AG04449 (cell line): ENCODE measurements at regions of chr12 and their contacts with region 1.

Region 1: GRCh38 chr12:3299929-3300832 is 190.8 kb upstream of the PRMT8 start:
- DNase-seq: peak; percentile 70
- H3K4me3 ChIP-seq: peak overlapping the region; percentile 32
- CTCF ChIP-seq: peak; percentile 94

Region 2: DNA sequence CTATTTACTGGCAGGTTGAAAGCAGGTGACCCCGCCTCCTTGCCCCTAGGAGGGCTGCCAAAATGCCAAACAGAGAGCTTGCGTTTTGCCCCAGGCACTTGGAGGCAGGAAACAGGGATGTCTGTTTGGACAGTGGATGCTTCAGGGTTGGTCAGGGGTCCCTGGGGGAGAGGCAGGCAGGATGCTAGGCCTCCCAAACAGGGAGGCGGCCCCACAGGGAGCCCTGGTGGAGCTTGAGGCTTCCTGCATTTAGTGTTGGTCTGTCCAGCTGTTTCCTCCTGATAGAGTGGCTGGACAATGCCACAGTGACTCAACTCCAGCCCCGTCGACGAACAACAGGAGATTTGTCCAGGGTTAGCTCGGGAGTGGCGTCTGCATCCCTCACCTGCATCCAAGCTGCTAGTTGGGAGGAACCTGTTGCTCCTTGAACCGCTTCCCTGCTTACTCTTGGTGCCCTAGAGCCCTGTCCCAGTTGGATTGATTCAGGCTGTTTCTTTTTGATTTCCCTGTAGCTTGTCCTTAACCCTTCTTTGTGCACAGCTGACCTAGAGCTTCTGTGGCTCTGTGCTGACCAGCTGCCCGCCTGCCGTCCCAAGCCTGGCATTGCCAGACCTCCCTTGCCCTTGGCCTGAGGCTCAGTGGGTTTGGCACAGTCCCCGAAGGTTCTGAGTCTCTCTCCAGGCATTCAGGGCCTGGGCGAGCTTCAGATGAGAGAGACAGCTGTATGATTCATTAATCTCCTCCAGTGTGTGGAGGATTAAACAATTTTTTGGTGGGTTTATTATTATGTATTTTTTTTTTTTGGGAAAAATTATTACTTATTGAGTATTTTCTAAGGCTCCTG is 177.1 kb before region 1 on chr12:
- CTCF ChIA-PET with region 1: interaction called, 12 read pairs
- POLR2A ChIA-PET with region 1: no interaction called
- DNase-seq: no peak
- H3K4me3 ChIP-seq: no peak overlapping the region
- CTCF ChIP-seq: no peak

Region 3: DNA sequence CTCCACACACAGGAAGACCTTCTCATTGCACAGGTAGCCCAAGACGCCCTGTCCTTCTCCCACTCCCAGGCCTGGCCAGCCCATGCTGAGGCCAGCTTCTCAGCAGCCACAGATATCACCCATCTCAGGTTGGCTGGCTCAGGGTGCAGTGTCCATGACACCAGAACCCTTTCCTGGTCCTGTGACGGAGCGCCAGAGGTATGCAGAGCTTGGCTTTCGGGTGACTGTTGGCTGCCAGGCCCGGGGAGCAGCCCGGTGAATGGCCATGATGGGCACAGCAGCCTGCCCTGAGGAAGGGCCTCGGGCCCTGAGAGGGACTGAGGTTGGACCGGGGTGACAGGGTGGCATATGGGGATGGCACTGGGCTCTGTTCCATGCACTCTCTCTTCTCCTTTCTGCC is 49.6 kb before region 1 on chr12:
- CTCF ChIA-PET with region 1: no interaction called
- POLR2A ChIA-PET with region 1: no interaction called
- DNase-seq: no peak
- H3K4me3 ChIP-seq: no peak overlapping the region
- CTCF ChIP-seq: no peak

Region 4: GRCh38 chr12:3313675-3314663 is 13.8 kb after region 1 on chr12:
- CTCF ChIA-PET with region 1: interaction called, 174 read pairs
- POLR2A ChIA-PET with region 1: interaction called, 5 read pairs
- DNase-seq: no peak
- H3K4me3 ChIP-seq: no peak overlapping the region
- CTCF ChIP-seq: peak; percentile 47

Region 5: DNA sequence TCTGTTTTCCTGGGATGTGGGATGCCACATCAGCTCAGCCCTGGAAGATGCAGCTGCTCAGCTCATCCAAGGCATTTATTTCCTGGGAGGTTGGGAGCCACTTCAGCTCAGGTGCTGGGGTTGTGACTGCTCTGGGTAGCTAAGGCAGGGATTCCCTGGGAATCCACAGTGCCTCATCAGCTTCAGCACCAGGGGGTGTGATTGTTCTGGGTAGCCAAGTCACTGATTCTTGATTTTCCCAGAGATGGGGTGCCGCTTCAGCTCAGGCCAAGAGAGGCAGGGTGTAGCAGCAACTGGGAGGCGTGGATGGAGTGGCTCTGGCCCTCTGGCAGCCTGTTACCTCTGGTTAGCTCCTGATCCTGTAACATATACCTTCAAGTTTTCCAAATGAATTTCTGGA is 109.5 kb after region 1 on chr12:
- CTCF ChIA-PET with region 1: no interaction called
- POLR2A ChIA-PET with region 1: no interaction called
- DNase-seq: no peak
- H3K4me3 ChIP-seq: no peak overlapping the region
- CTCF ChIP-seq: no peak

Region 6: GRCh38 chr12:3673981-3674708 is 374.0 kb after region 1 on chr12:
- CTCF ChIA-PET with region 1: interaction called, 11 read pairs
- POLR2A ChIA-PET with region 1: no interaction called
- DNase-seq: no peak
- H3K4me3 ChIP-seq: no peak overlapping the region
- CTCF ChIP-seq: no peak

Region 7: DNA sequence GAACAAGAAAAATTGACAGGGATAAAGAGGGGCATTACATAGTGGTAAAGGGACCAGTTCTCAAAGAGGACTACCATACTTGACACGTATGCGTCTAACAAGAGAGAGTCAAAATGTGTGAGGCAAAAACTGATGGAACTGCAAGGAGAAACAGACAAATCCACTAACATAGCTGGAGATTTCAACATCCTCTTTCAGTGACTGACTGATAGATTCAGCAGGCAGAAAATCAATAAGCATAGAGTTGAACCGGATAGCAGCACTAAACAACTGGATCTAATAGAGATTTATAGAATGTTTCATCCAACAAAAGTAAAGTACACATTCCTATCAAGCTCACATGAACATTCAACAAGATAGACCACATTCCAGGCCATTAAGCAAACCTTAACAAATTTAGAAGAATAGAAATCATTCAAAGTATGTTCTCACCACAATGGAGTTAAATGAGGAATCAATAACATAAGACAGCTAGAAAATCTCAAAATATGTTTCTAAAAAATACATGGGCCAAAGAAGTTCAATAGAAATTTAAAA is 468.8 kb after region 1 on chr12:
- CTCF ChIA-PET with region 1: interaction called, 189 read pairs
- POLR2A ChIA-PET with region 1: no interaction called
- DNase-seq: no peak
- H3K4me3 ChIP-seq: no peak overlapping the region
- CTCF ChIP-seq: no peak

Region 8: DNA sequence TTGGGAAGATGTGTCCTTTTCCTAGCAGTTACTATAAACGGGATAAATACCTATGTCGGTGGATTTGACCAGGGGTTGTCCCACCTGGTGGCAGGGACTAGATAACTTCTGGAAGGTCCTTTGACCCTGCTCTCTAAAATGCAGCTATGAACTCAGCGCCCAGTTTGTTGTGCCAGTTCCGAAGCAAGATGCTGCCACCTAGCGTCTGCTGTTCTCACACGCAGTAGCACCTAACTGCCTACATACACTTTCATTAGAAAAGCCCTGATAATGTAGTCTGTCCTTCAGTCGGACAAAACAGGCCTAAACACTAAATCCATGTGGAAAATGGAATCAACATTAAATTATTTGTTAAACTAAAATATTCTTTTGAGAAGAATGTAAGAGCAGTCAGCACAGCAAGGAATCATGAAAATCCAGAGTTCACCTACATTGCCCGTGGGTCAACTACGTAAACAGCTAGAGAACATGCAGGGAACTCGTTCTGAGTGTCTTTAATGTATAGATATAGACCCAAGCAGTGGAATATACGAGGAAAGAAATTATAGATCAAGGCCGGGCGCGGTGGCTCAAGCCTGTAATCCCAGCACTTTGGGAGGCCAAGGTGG is 503.8 kb after region 1 on chr12:
- CTCF ChIA-PET with region 1: interaction called, 259 read pairs
- POLR2A ChIA-PET with region 1: no interaction called
- DNase-seq: peak; percentile 16
- H3K4me3 ChIP-seq: no peak overlapping the region
- CTCF ChIP-seq: peak; percentile 82